ENCODE measurements at regions of chr17 and their contacts with region 1.

Region 1: GRCh38 chr17:41688699-41689496 is at the start of gene EIF1:
- DNase-seq: peak; percentile 100
- ATAC-seq: peak; percentile 78
- H3K4me3 Mint-ChIP-seq: peak within 1 kb of the TSS; percentile 95
- H3K27ac Mint-ChIP-seq: peak within 1 kb of the TSS; percentile 99
- H3K4me1 Mint-ChIP-seq: peaks cover 39% of the 10 kb centered on the region
- H3K27me3 Mint-ChIP-seq: no peaks in the 10 kb centered on the region
- CTCF ChIP-seq: no peak
- total RNA-seq, gene EIF1: 843 and 900 TPM in 2 replicates

Region 2: GRCh38 chr17:40219073-40219860 is 1469.6 kb before region 1 on chr17 and contains the start of gene WIPF2:
- CTCF ChIA-PET with region 1: no interaction called
- POLR2A ChIA-PET with region 1: interaction called, 11 read pairs
- intact Hi-C with region 1: loop called (anchors 5 kb)
- DNase-seq: peak; percentile 92
- ATAC-seq: peak; percentile 88
- H3K4me3 Mint-ChIP-seq: peak within 1 kb of the TSS; percentile 97
- H3K27ac Mint-ChIP-seq: peak within 1 kb of the TSS; percentile 100
- H3K4me1 Mint-ChIP-seq: peaks cover 30% of the 10 kb centered on the region
- H3K27me3 Mint-ChIP-seq: no peaks in the 10 kb centered on the region
- CTCF ChIP-seq: no peak
- total RNA-seq, gene WIPF2: 28.4 and 32.9 TPM in 2 replicates

Region 3: DNA sequence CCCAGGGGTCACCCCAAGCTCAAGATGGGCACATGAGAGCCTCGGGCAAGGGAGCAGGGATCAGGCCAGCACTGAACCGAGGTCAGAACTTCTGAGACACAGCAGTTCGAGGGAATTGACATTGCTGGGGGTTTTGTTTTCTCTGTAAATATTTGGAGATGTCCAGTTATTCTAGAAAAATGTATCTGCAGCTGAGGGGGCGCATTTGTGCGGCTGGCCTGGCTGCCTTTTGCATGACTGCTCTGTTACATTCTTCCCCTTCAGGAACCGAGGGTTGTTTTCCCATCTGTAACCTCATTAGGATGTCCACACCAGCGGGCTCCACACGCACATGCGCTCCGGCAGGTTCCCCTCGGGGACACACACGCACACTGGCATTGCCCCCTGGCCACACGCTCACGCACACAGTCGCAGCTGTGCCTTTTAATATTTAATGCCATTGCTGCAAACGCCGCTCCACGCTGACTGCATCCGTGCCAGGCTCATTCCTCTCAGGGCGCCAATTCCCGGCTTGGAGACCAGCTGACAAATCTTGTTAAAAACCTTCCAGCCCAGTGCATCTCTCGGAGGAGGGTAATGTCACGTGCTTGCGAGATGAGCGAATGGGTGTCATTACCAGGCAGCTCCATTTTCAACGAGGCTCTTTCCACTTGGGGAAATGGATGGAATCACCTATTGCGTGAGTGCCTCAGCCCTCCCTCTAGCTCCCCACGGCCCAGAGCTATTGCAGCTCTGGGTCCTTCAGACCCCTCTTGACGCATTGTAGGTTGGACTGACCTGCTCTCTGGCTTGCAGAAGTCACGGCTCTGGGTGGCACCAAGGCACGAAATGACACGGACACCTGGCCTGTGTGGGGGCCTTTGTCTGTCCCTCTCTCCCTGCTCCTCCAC is 1136.8 kb before region 1 on chr17:
- CTCF ChIA-PET with region 1: no interaction called
- POLR2A ChIA-PET with region 1: interaction called, 14 read pairs
- intact Hi-C with region 1: no loop called
- DNase-seq: peak; percentile 32
- ATAC-seq: peak; percentile 3
- H3K4me3 Mint-ChIP-seq: peak overlapping the region; percentile 36
- H3K27ac Mint-ChIP-seq: peak overlapping the region; percentile 99
- H3K4me1 Mint-ChIP-seq: peaks cover 100% of the 10 kb centered on the region
- H3K27me3 Mint-ChIP-seq: no peaks in the 10 kb centered on the region
- CTCF ChIP-seq: no peak

Region 4: DNA sequence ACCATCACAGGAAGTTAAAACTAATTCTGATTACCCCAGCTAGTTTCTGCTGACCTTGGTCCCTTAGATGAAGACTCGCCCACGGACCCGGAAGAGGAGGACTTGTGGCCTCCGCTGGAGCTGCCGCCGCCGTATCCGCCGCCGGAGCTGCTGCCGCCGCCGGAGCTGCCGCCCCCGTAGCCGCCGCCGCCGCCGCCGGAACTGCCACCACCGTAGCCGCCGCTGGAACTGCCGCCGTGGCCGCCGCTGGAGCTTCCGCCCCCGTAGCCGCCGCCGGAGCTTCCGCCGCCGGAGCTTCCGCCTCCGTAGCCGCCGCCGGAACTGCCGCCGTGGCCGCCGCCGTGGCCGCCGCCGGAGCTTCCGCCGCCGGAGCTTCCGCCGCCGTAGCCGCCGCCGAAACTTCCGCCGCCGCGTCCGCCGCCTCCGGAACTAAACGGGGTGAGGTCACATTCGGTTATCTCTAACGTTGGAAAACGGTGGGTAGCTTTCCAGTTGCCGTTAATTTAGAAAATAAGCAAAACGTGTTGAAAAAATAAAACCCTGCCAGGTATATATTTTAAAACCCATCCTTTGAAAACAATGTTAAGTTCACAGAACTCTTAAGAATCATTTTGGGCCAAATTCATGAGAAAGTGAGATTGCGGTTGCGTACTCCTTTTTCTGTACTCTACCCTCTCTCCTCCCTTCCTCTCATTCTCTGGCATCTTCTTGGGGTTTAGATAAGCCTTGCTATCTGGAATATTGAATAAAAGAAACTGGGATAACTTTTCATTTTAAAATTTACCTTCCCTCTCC is 870.0 kb before region 1 on chr17:
- CTCF ChIA-PET with region 1: no interaction called
- POLR2A ChIA-PET with region 1: interaction called, 25 read pairs
- intact Hi-C with region 1: loop called (anchors 1 kb)
- DNase-seq: peak; percentile 79
- ATAC-seq: peak; percentile 89
- H3K4me3 Mint-ChIP-seq: peak overlapping the region; percentile 87
- H3K27ac Mint-ChIP-seq: peak overlapping the region; percentile 83
- H3K4me1 Mint-ChIP-seq: peaks cover 10% of the 10 kb centered on the region
- H3K27me3 Mint-ChIP-seq: peaks cover 14% of the 10 kb centered on the region
- CTCF ChIP-seq: no peak

Region 5: GRCh38 chr17:41672153-41672552 is 16.7 kb before region 1 on chr17:
- CTCF ChIA-PET with region 1: interaction called, 72 read pairs
- POLR2A ChIA-PET with region 1: interaction called, 421 read pairs
- intact Hi-C with region 1: loop called (anchors 1 kb)
- DNase-seq: no peak
- ATAC-seq: no peak
- H3K4me3 Mint-ChIP-seq: no peak overlapping the region
- H3K27ac Mint-ChIP-seq: no peak overlapping the region
- H3K4me1 Mint-ChIP-seq: peaks cover 47% of the 10 kb centered on the region
- H3K27me3 Mint-ChIP-seq: no peaks in the 10 kb centered on the region
- CTCF ChIP-seq: no peak

Region 6: GRCh38 chr17:41772218-41772585 is 83.3 kb after region 1 on chr17:
- CTCF ChIA-PET with region 1: no interaction called
- POLR2A ChIA-PET with region 1: no interaction called
- intact Hi-C with region 1: no loop called
- DNase-seq: no peak
- ATAC-seq: no peak
- H3K4me3 Mint-ChIP-seq: no peak overlapping the region
- H3K27ac Mint-ChIP-seq: no peak overlapping the region
- H3K4me1 Mint-ChIP-seq: peaks cover 24% of the 10 kb centered on the region
- H3K27me3 Mint-ChIP-seq: no peaks in the 10 kb centered on the region
- CTCF ChIP-seq: no peak

Region 7: GRCh38 chr17:41811549-41812380 is 122.9 kb after region 1 on chr17 and contains the start of gene P3H4:
- CTCF ChIA-PET with region 1: no interaction called
- POLR2A ChIA-PET with region 1: interaction called, 12 read pairs
- intact Hi-C with region 1: no loop called
- DNase-seq: peak; percentile 79
- ATAC-seq: peak; percentile 94
- H3K4me3 Mint-ChIP-seq: peak within 1 kb of the TSS; percentile 87
- H3K27ac Mint-ChIP-seq: peak within 1 kb of the TSS; percentile 66
- H3K4me1 Mint-ChIP-seq: peaks cover 15% of the 10 kb centered on the region
- H3K27me3 Mint-ChIP-seq: peaks cover 9% of the 10 kb centered on the region
- CTCF ChIP-seq: no peak
- total RNA-seq, gene P3H4: 0.76 and 1.9 TPM in 2 replicates

Region 8: DNA sequence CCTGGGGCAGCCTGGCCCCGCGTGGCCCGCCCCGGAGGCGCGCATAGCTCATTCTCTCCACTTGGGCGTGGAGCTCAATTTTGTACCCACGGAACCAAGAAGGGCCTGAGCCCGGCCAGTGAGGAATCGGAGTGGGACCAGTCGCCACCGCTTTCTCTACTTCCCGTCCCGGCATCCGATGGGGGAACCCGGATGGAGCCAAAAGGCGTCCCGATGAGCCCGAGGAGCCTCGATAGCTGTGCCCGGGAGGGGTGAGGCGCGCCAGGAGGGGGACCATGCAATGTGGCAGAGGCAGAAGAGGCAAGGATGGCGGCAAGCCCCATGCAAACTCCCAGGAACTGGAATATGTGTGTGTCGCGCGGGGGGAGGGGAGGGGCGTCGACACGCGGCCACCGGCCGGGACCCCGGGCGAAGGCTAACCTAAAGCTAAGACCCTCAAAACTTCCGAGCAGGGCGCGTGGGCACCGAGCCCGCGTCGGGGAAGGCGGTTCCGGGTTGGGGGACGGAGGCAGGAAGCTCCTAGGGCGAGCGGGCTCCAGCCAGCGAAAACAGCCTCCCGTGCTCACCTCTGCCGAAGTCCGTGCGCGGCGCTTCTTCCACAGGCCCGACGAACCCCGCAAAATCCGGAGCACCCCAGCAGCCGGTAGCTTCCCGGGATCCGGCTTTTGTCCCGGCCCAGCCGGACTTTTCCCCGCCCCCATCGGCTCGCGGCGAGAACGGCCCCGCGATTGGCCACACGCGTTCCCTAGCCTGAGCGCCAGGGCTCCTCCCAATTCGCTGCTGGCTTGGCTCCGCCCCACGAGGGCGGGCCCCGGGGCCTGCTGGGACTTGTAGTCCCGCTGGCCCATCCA is 229.6 kb after region 1 on chr17 and contains the start of gene ACLY:
- CTCF ChIA-PET with region 1: no interaction called
- POLR2A ChIA-PET with region 1: interaction called, 10 read pairs
- intact Hi-C with region 1: no loop called
- DNase-seq: peak; percentile 96
- ATAC-seq: peak; percentile 99
- H3K4me3 Mint-ChIP-seq: peak within 1 kb of the TSS; percentile 92
- H3K27ac Mint-ChIP-seq: peak within 1 kb of the TSS; percentile 84
- H3K4me1 Mint-ChIP-seq: peaks cover 31% of the 10 kb centered on the region
- H3K27me3 Mint-ChIP-seq: no peaks in the 10 kb centered on the region
- CTCF ChIP-seq: no peak
- total RNA-seq, gene ACLY: 133 and 143 TPM in 2 replicates